K562 (cell line): ENCODE measurements at regions of chr3 and their contacts with region 1.

Region 1: DNA sequence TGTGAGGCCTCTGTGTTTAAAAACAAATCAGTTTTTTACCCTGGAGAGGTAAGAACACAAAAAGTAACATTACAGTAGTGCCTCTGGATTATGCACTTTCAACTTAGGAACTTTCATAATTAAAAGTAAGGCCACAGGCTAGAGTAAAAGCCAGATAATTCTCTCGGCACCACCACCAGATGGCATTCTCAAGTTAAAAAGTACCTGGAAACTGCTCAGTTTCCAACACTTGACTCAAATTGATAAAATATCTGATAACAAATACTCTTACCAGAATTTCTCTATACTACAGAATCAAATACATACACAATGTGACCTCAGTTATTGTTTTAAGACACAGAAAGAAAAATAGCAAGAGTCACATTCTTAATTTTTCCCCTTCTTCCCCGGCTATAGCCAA is 19.9 kb downstream of the SPICE1 start:
- DNase-seq: peak in 1 of 4 experiments; percentile 16
- ATAC-seq: peak; percentile 52; the same call in 1 of the 3 replicates
- H3K4me3 ChIP-seq: no peak overlapping the region
- H3K27ac ChIP-seq: no peak overlapping the region
- H3K4me1 ChIP-seq: no peaks in the 10 kb centered on the region
- H3K27me3 ChIP-seq: no peaks in the 10 kb centered on the region
- CTCF ChIP-seq: peak; percentile 23 to 42 (median 31); a peak in 3 of 6 replicates
- EP300 ChIP-seq: no peak
- POLR2A ChIP-seq: no peak
- RAD21 ChIP-seq: peak; percentile 28 to 33; a peak in 1 of 4 replicates

Region 2: DNA sequence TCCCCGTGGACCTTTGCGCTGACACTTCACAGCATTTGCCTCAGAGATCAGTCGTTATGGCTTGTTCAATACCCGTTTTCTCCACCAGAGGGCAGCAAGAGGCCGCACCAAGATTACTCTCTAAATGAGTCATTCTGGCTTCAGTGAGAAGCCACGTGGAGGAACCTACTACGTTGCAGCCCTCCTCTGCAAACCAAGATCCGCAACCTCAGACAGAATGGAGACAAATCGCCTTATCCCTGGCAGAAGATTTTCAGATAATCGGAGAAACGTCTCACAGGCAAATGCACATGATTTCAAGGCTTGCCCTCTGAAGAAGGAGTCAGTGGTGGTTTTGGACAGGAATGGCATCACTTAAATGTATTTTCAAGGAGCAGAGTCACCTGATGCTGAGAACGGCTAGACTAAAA is 443.7 kb before region 1 on chr3:
- CTCF ChIA-PET with region 1: no interaction called
- POLR2A ChIA-PET with region 1: no interaction called
- in situ Hi-C with region 1: no loop called
- intact Hi-C with region 1: loop called (anchors 5 kb)
- DNase-seq: peak; percentile 62 to 73 (median 65)
- ATAC-seq: peak; percentile 95
- H3K4me3 ChIP-seq: no peak overlapping the region
- H3K27ac ChIP-seq: no peak overlapping the region
- H3K4me1 ChIP-seq: no peaks in the 10 kb centered on the region; a peak in 2 of 5 replicates
- H3K27me3 ChIP-seq: no peaks in the 10 kb centered on the region; a peak in 1 of 5 replicates
- CTCF ChIP-seq: peak; percentile 66 to 79 (median 75)
- EP300 ChIP-seq: no peak
- POLR2A ChIP-seq: no peak
- RAD21 ChIP-seq: peak; percentile 78 to 88

Region 3: DNA sequence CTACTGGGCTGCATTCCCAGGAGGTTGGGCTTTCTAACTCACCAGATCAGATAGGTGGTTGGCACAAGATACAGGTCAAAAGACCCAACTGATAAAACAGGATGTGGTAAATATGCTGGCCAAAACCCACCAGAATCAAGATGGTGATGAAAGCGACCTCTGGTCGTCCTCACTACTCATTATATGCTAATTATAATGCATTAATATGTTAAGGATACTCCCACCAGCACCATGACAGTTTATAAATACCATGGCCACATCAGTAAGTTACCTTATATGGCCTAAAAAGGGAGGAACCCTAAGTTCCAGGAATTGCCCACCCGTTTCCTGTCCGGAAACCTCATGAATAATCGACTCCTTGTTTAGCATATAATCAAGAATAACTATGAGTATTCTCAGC is 85.4 kb before region 1 on chr3:
- CTCF ChIA-PET with region 1: no interaction called
- POLR2A ChIA-PET with region 1: no interaction called
- in situ Hi-C with region 1: no loop called
- intact Hi-C with region 1: no loop called
- DNase-seq: no peak
- ATAC-seq: no peak
- H3K4me3 ChIP-seq: no peak overlapping the region
- H3K27ac ChIP-seq: no peak overlapping the region; the same call in 2 of the 3 replicates
- H3K4me1 ChIP-seq: no peaks in the 10 kb centered on the region
- H3K27me3 ChIP-seq: no peaks in the 10 kb centered on the region
- CTCF ChIP-seq: no peak
- EP300 ChIP-seq: no peak
- POLR2A ChIP-seq: no peak
- RAD21 ChIP-seq: no peak

Region 4: GRCh38 chr3:113575206-113575605 is 80.2 kb after region 1 on chr3:
- CTCF ChIA-PET with region 1: interaction called, 7 read pairs
- POLR2A ChIA-PET with region 1: no interaction called
- in situ Hi-C with region 1: no loop called
- intact Hi-C with region 1: loop called (anchors 1 kb)
- DNase-seq: no peak
- ATAC-seq: no peak
- H3K4me3 ChIP-seq: no peak overlapping the region
- H3K27ac ChIP-seq: no peak overlapping the region
- H3K4me1 ChIP-seq: no peaks in the 10 kb centered on the region
- H3K27me3 ChIP-seq: no peaks in the 10 kb centered on the region
- CTCF ChIP-seq: no peak
- EP300 ChIP-seq: no peak
- POLR2A ChIP-seq: no peak
- RAD21 ChIP-seq: no peak

Region 5: GRCh38 chr3:113626503-113627371 is 131.7 kb after region 1 on chr3:
- CTCF ChIA-PET with region 1: no interaction called
- POLR2A ChIA-PET with region 1: no interaction called
- in situ Hi-C with region 1: no loop called
- intact Hi-C with region 1: loop called (anchors 1 kb)
- DNase-seq: peak; percentile 36 to 61 (median 41)
- ATAC-seq: peak; percentile 95
- H3K4me3 ChIP-seq: no peak overlapping the region
- H3K27ac ChIP-seq: no peak overlapping the region
- H3K4me1 ChIP-seq: no peaks in the 10 kb centered on the region; a peak in 1 of 5 replicates
- H3K27me3 ChIP-seq: peaks cover 5 to 32% of the 10 kb centered on the region in 2 experiments; a peak in 3 of 5 replicates
- CTCF ChIP-seq: peak; percentile 70 to 81 (median 80)
- EP300 ChIP-seq: no peak
- POLR2A ChIP-seq: no peak
- RAD21 ChIP-seq: peak; percentile 66 to 73

Region 6: DNA sequence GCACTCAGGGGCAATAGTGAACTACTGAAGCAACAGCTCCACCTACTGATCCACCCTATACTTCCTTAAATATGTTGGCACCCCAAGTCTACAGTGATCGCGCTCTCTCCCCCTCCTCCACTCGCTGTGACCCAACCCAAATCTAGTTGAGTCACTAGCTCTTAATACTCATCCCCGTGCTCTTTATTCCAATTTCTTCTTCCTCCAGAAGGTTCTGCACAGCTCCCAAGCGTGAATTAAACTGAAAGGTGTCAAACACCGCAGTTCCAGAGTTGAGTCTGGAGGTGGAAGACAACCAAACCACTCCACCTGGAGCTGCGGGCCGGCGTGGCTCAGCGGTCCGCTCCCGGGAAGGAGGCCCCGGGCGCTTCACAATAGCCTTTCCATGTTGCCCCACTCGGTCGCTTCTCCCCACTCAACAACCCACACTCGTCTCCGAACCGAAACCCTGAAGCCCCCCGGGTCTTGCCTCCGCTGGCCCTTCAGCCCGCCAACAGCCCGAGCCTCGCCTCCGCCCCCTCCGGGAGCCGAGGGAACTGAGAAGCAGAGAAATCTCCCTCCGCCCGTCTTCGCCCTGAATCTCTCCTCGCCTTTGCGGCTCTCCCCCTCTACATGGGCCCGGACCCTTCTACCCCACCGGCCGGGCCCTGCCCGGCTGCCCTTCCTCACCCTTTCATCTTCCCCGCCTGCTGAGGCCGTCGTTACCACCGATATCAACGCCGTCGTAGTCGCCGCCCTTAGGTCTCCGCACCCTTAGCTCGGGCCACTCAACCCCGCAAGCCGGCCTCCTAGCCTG is 250.4 kb after region 1 on chr3:
- CTCF ChIA-PET with region 1: interaction called, 3 read pairs
- POLR2A ChIA-PET with region 1: no interaction called
- in situ Hi-C with region 1: no loop called
- intact Hi-C with region 1: loop called (anchors 5 kb)
- DNase-seq: peak; percentile 47 to 85 (median 68)
- ATAC-seq: peak; percentile 78
- H3K4me3 ChIP-seq: peak overlapping the region; percentile 90
- H3K27ac ChIP-seq: peak overlapping the region; percentile 98
- H3K4me1 ChIP-seq: peaks cover 7 to 11% of the 10 kb centered on the region in 2 experiments
- H3K27me3 ChIP-seq: no peaks in the 10 kb centered on the region
- CTCF ChIP-seq: peak; percentile 60 to 77 (median 76); a peak in 5 of 6 replicates
- EP300 ChIP-seq: no peak
- POLR2A ChIP-seq: no peak
- RAD21 ChIP-seq: peak; percentile 48 to 53; a peak in 3 of 4 replicates